ENCODE measurements at regions of chr11 and their contacts with region 1.

Region 1: DNA sequence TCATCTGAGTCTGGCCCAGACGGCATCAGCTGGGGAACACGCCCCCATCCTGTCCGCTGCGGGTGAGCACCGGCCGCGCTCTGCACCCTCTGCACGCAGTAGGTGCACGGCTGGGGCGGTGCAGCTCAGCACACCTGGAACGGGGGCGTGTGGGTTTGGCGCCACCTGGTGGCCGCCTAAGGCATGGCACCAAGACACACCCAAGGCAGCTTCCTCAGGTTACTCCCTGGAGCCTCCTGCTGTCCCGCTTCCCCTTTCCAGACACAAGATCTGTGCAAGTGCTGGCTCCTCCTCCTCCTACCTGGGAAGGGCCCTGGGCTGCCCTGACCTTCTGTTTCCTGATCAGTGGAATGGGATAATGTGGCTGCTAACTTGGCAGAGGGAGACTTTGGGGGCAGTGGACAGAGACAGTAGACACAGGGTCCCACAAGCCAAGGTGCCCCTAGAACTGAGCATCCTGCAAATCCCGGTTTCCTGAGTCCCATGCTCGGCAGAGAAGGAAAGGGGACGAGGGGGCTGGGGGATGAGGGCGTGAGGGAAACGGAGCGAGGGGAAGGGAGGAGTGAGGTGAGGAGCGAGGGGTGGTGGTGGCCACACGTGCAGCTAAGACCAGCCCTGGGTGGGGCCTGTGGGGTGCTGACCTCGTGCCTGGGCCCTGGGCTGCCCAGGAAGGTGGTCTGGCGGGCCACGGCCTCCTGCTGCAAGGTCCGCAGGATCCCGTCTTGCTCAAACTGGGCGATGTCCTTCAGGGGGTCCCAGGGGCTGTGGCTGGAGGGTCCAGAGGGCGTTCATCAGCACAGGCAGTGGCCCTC is 34.8 kb upstream of the CARS1 start:
- DNase-seq: peak; percentile 91

Region 2: GRCh38 chr11:3037040-3037944 is 54.7 kb before region 1 on chr11:
- CTCF ChIA-PET with region 1: interaction called, 45 read pairs
- POLR2A ChIA-PET with region 1: no interaction called
- DNase-seq: peak; percentile 75

Region 3: DNA sequence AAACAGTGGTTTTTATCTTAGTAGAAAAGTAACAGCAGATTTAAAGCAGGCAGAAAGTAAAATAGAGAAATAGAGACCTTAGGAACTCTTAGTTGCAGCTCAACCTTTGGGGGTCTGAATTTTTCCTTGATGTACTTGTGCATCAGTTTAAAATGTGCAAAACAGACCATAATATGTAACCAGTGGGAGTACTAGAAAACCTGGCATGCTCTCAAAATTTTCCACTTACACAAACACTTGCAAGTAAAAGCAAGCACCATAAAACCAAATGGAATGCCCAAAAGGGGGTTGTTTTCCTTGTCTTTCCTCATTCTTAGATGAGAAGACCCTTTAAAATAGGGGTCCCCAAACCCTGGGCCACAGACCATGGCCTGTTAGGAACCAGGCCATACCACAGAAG is 153.1 kb after region 1 on chr11:
- CTCF ChIA-PET with region 1: no interaction called
- POLR2A ChIA-PET with region 1: no interaction called
- DNase-seq: no peak

Measured in HEK293T (cell line).